A549 (cell line): ENCODE measurements at regions of chr15 and their contacts with region 1.

Region 1: GRCh38 chr15:73908030-73908821 is 18.0 kb upstream of the LOXL1 start:
- DNase-seq: peak; percentile 52 to 54
- ATAC-seq: peak; percentile 98 to 100
- H3K4me3 ChIP-seq: no peak overlapping the region
- H3K27ac ChIP-seq: no peak overlapping the region
- H3K4me1 ChIP-seq: no peaks in the 10 kb centered on the region
- CTCF ChIP-seq: peak; percentile 63
- EP300 ChIP-seq: no peak
- POLR2A ChIP-seq: no peak
- RAD21 ChIP-seq: peak; percentile 76 to 78

Region 2: DNA sequence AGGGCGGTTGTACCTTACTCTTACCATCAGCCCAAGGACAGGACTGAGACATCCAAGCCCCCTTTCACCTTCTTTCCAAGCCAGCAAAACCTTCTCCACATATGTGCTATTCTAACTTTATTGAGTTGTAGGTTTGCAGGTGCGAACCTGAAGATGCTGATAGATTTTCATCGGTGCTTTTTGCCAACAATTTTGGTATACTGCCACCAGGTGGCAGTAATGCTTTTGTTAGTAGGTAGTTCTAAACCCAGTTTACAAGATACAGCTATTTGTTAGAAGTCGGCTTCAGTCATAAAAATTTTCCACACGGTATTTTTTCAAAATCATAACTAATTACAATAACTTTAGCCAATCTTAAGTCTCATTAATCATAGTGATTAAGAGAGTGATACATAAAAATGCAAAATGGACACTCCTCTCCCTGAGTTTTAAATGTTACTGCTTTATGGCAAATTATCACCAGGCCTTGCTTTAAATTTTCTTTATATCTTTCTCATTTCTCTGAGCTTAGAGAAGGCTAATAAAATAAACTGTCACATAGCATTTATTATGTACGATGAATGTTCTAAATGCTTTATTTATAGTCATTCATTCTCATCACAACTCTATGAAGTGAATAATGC is 34.2 kb before region 1 on chr15:
- CTCF ChIA-PET with region 1: interaction called, 23 read pairs
- POLR2A ChIA-PET with region 1: no interaction called
- DNase-seq: peak; percentile 19 to 47
- ATAC-seq: peak in 1 of 2 experiments; percentile 55; a peak in 2 of 6 replicates
- H3K4me3 ChIP-seq: no peak overlapping the region
- H3K27ac ChIP-seq: no peak overlapping the region
- H3K4me1 ChIP-seq: no peaks in the 10 kb centered on the region
- CTCF ChIP-seq: peak; percentile 56
- EP300 ChIP-seq: no peak
- POLR2A ChIP-seq: no peak
- RAD21 ChIP-seq: peak; percentile 46 to 55; a peak in 4 of 5 replicates

Region 3: GRCh38 chr15:73891328-73892315 is 16.6 kb before region 1 on chr15:
- CTCF ChIA-PET with region 1: interaction called, 31 read pairs
- POLR2A ChIA-PET with region 1: no interaction called
- DNase-seq: no peak
- ATAC-seq: no peak
- H3K4me3 ChIP-seq: no peak overlapping the region
- H3K27ac ChIP-seq: no peak overlapping the region
- H3K4me1 ChIP-seq: no peaks in the 10 kb centered on the region
- CTCF ChIP-seq: no peak
- EP300 ChIP-seq: no peak
- POLR2A ChIP-seq: no peak
- RAD21 ChIP-seq: no peak